Activated T-helper 1 cell treated with anti-CD3 and anti-CD28 coated beads, Interleukin-12 subunit alpha, Interleukin-12 subunit beta, Interleukin-2, Interleukin-4 antibody, amounts not matched to agents 30 ng/mL and 10 ng/mL and 1 ng/mL, durations not matched to agents 14 hours and 24 hours and 36 hours (primary cell): ENCODE measurements at regions of chr4 and their contacts with region 1.

Region 1: GRCh38 chr4:94451695-94452475 is at the start of gene PDLIM5:
- DNase-seq: peak; percentile 86
- H3K4me3 Mint-ChIP-seq: peak within 1 kb of the TSS; percentile 85
- H3K27ac Mint-ChIP-seq: peak within 1 kb of the TSS; percentile 8
- H3K4me1 Mint-ChIP-seq: peaks cover 25% of the 10 kb centered on the region
- H3K27me3 Mint-ChIP-seq: peaks cover 38% of the 10 kb centered on the region
- total RNA-seq, gene PDLIM5: 17.8 and 20.6 TPM in 2 replicates

Region 2: DNA sequence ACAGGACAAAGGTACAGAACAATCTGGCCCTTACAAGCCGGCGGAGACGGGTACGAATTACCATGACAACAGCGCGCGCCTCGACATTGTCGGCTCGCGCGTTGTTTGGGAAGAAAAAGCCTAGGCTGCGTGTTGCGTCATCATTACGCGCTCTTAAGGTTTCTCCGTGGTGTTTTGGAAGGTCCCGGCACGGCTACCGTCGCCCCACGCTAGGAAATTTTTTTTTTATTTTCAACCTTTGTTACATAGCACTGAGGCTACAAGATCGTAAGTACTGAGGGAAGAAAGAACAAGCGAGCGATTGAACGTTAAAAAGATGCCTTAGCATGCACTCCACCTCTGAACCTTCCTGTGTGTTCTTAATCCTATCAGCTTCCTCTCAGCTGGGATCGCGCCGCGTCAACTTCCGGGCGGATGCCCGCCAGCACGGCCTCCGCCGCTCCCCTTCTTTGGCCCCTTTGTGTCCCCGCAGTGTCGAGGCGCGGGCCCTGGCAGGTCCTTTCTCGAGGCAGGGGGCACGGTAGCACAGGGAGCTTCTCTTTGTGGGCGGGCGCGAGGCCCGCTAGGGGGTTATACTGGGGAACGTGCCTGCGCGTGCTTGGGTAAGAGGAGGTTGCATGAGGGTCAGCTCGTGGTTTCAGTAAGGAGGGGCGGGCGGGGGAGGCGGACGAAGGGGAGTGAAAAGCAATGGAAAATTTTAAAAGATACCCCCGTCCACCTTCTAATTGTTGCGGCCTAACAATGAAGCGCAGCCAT is 244.2 kb before region 1 on chr4 and contains the start of gene SMARCAD1:
- intact Hi-C with region 1: loop called (anchors 1 kb)
- DNase-seq: peak; percentile 82
- H3K4me3 Mint-ChIP-seq: peak within 1 kb of the TSS; percentile 95
- H3K27ac Mint-ChIP-seq: peak within 1 kb of the TSS; percentile 99
- H3K4me1 Mint-ChIP-seq: peaks cover 28% of the 10 kb centered on the region
- H3K27me3 Mint-ChIP-seq: peaks cover 1% of the 10 kb centered on the region
- total RNA-seq, gene SMARCAD1: 44.0 and 46.3 TPM in 2 replicates

Region 3: GRCh38 chr4:94325835-94326234 is 126.0 kb before region 1 on chr4:
- intact Hi-C with region 1: no loop called
- DNase-seq: no peak
- H3K4me3 Mint-ChIP-seq: no peak overlapping the region
- H3K27ac Mint-ChIP-seq: no peak overlapping the region
- H3K4me1 Mint-ChIP-seq: no peaks in the 10 kb centered on the region
- H3K27me3 Mint-ChIP-seq: no peaks in the 10 kb centered on the region

Region 4: GRCh38 chr4:94338681-94339351 is 113.1 kb before region 1 on chr4:
- intact Hi-C with region 1: loop called (anchors 2 kb)
- DNase-seq: no peak
- H3K4me3 Mint-ChIP-seq: peak overlapping the region; percentile 35
- H3K27ac Mint-ChIP-seq: peak overlapping the region; percentile 85
- H3K4me1 Mint-ChIP-seq: peaks cover 27% of the 10 kb centered on the region
- H3K27me3 Mint-ChIP-seq: peaks cover 3% of the 10 kb centered on the region

Region 5: GRCh38 chr4:94406668-94407437 is 45.0 kb before region 1 on chr4:
- intact Hi-C with region 1: loop called (anchors 5 kb)
- DNase-seq: peak; percentile 15
- H3K4me3 Mint-ChIP-seq: no peak overlapping the region
- H3K27ac Mint-ChIP-seq: no peak overlapping the region
- H3K4me1 Mint-ChIP-seq: no peaks in the 10 kb centered on the region
- H3K27me3 Mint-ChIP-seq: peaks cover 5% of the 10 kb centered on the region

Region 6: DNA sequence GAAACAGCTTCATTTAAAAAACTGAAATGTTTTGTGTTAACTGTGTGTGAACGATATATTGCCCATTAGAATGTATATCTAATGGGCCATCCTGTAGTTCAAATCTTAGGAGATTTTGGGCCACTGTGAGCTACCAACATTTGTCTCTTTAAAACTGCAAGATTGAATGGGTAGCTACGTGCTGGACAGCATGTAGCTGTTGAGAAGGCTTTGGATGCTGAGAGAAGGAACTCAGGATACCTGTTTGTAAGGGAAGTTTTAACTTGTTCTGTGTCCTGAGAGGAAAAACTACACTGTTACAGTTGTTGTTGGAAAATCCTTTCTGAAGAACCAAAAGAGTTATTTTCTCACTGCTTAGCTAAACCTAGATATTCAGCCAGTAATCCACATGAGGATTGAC is 45.8 kb after region 1 on chr4:
- intact Hi-C with region 1: loop called (anchors 2 kb)
- DNase-seq: no peak
- H3K4me3 Mint-ChIP-seq: no peak overlapping the region
- H3K27ac Mint-ChIP-seq: no peak overlapping the region
- H3K4me1 Mint-ChIP-seq: no peaks in the 10 kb centered on the region
- H3K27me3 Mint-ChIP-seq: peaks cover 1% of the 10 kb centered on the region

Region 7: GRCh38 chr4:94595879-94596483 is 144.1 kb after region 1 on chr4:
- intact Hi-C with region 1: loop called (anchors 1 kb)
- DNase-seq: no peak
- H3K4me3 Mint-ChIP-seq: no peak overlapping the region
- H3K27ac Mint-ChIP-seq: no peak overlapping the region
- H3K4me1 Mint-ChIP-seq: no peaks in the 10 kb centered on the region
- H3K27me3 Mint-ChIP-seq: no peaks in the 10 kb centered on the region